Endothelial cell of umbilical vein (primary cell): ENCODE measurements at regions of chr12 and their contacts with region 1.

Region 1: GRCh38 chr12:88111074-88111652 is 30.7 kb downstream of the CEP290 start:
- DNase-seq: peak; percentile 67
- H3K4me3 ChIP-seq: peak overlapping the region in 1 of 3 experiments; percentile 61
- H3K27ac ChIP-seq: peak overlapping the region; percentile 20
- H3K4me1 ChIP-seq: peaks cover 5% of the 10 kb centered on the region
- H3K27me3 ChIP-seq: no peaks in the 10 kb centered on the region
- CTCF ChIP-seq: peak in 1 of 2 donors; percentile 2
- POLR2A ChIP-seq: no peak

Region 2: DNA sequence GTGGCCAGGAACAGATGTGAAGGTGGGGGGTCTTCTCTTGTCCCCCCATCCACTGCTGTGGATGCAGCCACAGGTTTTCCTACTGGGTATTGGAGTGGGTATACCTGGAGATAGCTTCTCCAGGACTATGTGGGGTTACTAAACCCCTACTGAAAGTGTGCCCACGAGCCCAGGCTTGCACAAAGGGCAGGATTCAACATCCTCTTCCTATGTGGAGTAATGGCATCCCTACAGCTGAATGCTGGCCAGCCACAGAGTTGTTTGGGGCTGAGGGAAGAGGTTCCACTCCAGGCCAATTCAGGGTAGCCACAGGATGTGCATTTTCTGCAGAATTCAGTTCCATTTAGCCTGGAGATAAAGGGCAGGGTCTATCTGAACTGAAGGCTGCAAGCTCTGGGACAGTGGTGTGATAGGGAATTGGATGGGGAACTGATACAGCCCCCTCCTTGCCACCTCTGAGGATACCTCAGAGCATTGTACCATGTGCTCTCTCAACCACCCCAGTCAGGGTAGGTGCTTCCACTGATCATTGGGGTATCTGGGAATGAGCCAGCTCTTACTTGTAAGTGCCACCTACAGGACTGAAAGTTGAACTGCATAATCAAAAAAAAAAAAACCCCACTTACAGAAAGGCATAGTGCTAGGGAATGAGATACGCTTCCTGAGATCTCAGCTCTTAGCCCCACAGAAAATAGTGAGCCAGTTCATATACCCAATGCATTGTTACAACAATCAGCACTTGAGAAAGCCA is 282.0 kb after region 1 on chr12:
- CTCF ChIA-PET with region 1: no interaction called
- POLR2A ChIA-PET with region 1: no interaction called
- dilution Hi-C with region 1: no loop called
- intact Hi-C with region 1: loop called (anchors 1 kb)
- DNase-seq: peak; percentile 53
- H3K4me3 ChIP-seq: no peak overlapping the region
- H3K27ac ChIP-seq: no peak overlapping the region
- H3K4me1 ChIP-seq: no peaks in the 10 kb centered on the region
- H3K27me3 ChIP-seq: no peaks in the 10 kb centered on the region
- CTCF ChIP-seq: peak; percentile 36 to 50
- POLR2A ChIP-seq: no peak

Region 3: GRCh38 chr12:89529738-89530137 is 1418.6 kb after region 1 on chr12:
- CTCF ChIA-PET with region 1: no interaction called
- POLR2A ChIA-PET with region 1: no interaction called
- dilution Hi-C with region 1: no loop called
- intact Hi-C with region 1: loop called (anchors 1 kb)
- DNase-seq: peak; percentile 73
- H3K4me3 ChIP-seq: no peak overlapping the region
- H3K27ac ChIP-seq: no peak overlapping the region
- H3K4me1 ChIP-seq: peaks cover 4% of the 10 kb centered on the region
- H3K27me3 ChIP-seq: no peaks in the 10 kb centered on the region
- CTCF ChIP-seq: peak; percentile 49 to 51
- POLR2A ChIP-seq: no peak